CD8-positive, alpha-beta memory T cell (primary cell): ENCODE measurements at regions of chr6 and their contacts with region 1.

Region 1: DNA sequence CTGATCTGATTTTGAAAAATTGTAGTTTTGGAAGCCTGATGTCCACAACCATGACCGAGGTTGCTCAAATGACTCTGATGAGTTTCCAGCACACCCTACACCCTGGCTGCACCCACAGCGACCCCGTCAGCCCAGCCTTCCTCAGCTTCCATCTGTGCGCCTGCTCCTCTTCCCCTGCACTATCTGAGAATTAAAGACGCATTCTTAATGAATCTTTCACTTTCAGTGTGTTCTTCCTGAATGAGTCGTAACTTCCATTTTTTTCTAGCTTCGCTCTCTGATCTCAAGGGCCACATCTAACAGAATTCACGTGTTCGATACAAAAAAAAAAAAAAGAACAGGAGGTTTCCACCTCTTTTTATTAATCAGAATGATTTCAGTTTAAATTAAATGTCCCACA is 21.3 kb upstream of the RREB1 start:
- DNase-seq: peak in 3 of 5 donors; percentile 36 to 57 (median 50)
- H3K4me3 ChIP-seq: peak overlapping the region; percentile 21
- H3K4me3 Mint-ChIP-seq: peak overlapping the region; percentile 68 to 92 (median 84)
- H3K27ac ChIP-seq: no peak overlapping the region
- H3K27ac Mint-ChIP-seq: peak overlapping the region; percentile 62 to 97 (median 86)
- H3K4me1 ChIP-seq: peaks cover 26% of the 10 kb centered on the region
- H3K4me1 Mint-ChIP-seq: peaks cover 24 to 28% (median 26%) of the 10 kb centered on the region in 3 donors
- H3K27me3 ChIP-seq: no peaks in the 10 kb centered on the region
- H3K27me3 Mint-ChIP-seq: no peaks in the 10 kb centered on the region

Region 2: GRCh38 chr6:7058250-7058923 is 28.1 kb before region 1 on chr6:
- CTCF ChIA-PET with region 1: no interaction called
- POLR2A ChIA-PET with region 1: no interaction called
- DNase-seq: no peak
- H3K4me3 ChIP-seq: no peak overlapping the region
- H3K4me3 Mint-ChIP-seq: no peak overlapping the region
- H3K27ac ChIP-seq: no peak overlapping the region
- H3K27ac Mint-ChIP-seq: no peak overlapping the region
- H3K4me1 ChIP-seq: no peaks in the 10 kb centered on the region
- H3K4me1 Mint-ChIP-seq: no peaks in the 10 kb centered on the region
- H3K27me3 ChIP-seq: no peaks in the 10 kb centered on the region
- H3K27me3 Mint-ChIP-seq: no peaks in the 10 kb centered on the region

Region 3: DNA sequence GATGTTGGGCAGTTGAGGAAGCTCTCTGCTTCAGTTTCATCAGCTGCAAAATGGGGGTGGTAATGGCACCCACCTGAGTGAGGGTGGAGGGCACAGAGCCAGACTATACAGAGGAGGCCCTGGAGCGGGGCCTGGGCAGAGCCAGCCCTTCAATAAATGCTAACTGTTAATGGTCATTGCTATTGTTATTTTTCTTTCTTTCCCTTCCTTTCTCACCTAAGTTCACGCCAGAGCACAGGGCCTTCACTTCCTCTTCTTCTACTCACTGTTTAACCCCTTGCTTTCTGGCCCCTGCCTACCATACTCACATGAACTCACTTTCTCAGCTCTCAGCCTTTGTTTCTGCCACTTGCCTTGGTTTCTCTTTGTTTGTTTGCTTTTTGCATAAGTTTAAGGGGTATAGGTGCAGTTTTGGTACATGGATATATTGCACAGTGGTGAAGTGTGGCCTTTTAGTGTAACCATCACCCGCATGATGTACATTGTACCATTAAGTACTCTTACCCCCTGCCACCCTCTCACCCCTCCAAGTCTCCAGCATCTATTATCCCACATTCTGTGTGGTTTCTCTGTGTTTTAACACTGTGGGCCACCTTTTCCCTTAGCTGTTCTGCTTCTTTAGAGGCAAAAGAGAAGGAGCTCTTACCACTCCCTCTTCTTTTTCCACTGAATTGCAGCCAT is 13.7 kb after region 1 on chr6:
- CTCF ChIA-PET with region 1: interaction called, 18 read pairs
- POLR2A ChIA-PET with region 1: interaction called, 5 read pairs
- DNase-seq: no peak
- H3K4me3 ChIP-seq: no peak overlapping the region
- H3K4me3 Mint-ChIP-seq: no peak overlapping the region
- H3K27ac ChIP-seq: no peak overlapping the region
- H3K27ac Mint-ChIP-seq: no peak overlapping the region
- H3K4me1 ChIP-seq: no peaks in the 10 kb centered on the region
- H3K4me1 Mint-ChIP-seq: peaks cover 0 to 3% (median 0%) of the 10 kb centered on the region in 3 donors
- H3K27me3 ChIP-seq: no peaks in the 10 kb centered on the region
- H3K27me3 Mint-ChIP-seq: peaks cover 4 to 5% of the 10 kb centered on the region in 2 donors

Region 4: GRCh38 chr6:7107578-7108195 is 21.2 kb after region 1 on chr6 and contains the start of gene RREB1:
- CTCF ChIA-PET with region 1: interaction called, 18 read pairs
- POLR2A ChIA-PET with region 1: interaction called, 15 read pairs
- DNase-seq: peak; percentile 46 to 78 (median 59)
- H3K4me3 ChIP-seq: peak within 1 kb of the TSS; percentile 72
- H3K4me3 Mint-ChIP-seq: peak within 1 kb of the TSS; percentile 93 to 98 (median 96)
- H3K27ac ChIP-seq: peak within 1 kb of the TSS; percentile 74
- H3K27ac Mint-ChIP-seq: peak within 1 kb of the TSS; percentile 92 to 97 (median 94)
- H3K4me1 ChIP-seq: peaks cover 30% of the 10 kb centered on the region
- H3K4me1 Mint-ChIP-seq: peaks cover 34 to 43% (median 42%) of the 10 kb centered on the region in 3 donors
- H3K27me3 ChIP-seq: no peaks in the 10 kb centered on the region
- H3K27me3 Mint-ChIP-seq: peaks cover 0 to 1% of the 10 kb centered on the region in 2 donors
- total RNA-seq, gene RREB1: 17.7 to 18.7 TPM

Region 5: DNA sequence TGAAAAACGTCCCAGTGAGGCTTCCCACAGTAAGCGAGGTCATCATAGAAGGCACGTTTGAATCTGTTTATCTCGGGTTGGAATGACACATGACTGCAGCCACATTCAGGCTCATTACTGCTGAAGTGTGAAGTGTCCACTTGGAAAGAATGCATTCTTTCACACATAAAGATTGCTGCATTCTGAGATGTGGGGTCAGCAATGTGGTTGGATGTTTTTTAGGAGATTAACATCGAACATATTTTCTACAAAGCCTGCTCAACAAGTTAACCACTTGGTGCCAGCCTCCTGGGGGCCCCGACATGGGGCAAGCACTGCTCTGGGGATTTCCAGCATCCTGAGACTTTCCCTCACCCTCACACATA is 719.3 kb after region 1 on chr6:
- CTCF ChIA-PET with region 1: no interaction called
- POLR2A ChIA-PET with region 1: no interaction called
- DNase-seq: no peak
- H3K4me3 ChIP-seq: no peak overlapping the region
- H3K4me3 Mint-ChIP-seq: no peak overlapping the region
- H3K27ac ChIP-seq: no peak overlapping the region
- H3K27ac Mint-ChIP-seq: no peak overlapping the region
- H3K4me1 ChIP-seq: no peaks in the 10 kb centered on the region
- H3K4me1 Mint-ChIP-seq: no peaks in the 10 kb centered on the region
- H3K27me3 ChIP-seq: no peaks in the 10 kb centered on the region
- H3K27me3 Mint-ChIP-seq: peaks cover 7 to 33% of the 10 kb centered on the region in 2 donors